ENCODE measurements at regions of chr14 and their contacts with region 1.

Region 1: GRCh38 chr14:104708606-104709268 is 15.3 kb upstream of the ADSS1 start:
- DNase-seq: peak in 9 of 10 donors; percentile 56 to 96 (median 78)

Region 2: DNA sequence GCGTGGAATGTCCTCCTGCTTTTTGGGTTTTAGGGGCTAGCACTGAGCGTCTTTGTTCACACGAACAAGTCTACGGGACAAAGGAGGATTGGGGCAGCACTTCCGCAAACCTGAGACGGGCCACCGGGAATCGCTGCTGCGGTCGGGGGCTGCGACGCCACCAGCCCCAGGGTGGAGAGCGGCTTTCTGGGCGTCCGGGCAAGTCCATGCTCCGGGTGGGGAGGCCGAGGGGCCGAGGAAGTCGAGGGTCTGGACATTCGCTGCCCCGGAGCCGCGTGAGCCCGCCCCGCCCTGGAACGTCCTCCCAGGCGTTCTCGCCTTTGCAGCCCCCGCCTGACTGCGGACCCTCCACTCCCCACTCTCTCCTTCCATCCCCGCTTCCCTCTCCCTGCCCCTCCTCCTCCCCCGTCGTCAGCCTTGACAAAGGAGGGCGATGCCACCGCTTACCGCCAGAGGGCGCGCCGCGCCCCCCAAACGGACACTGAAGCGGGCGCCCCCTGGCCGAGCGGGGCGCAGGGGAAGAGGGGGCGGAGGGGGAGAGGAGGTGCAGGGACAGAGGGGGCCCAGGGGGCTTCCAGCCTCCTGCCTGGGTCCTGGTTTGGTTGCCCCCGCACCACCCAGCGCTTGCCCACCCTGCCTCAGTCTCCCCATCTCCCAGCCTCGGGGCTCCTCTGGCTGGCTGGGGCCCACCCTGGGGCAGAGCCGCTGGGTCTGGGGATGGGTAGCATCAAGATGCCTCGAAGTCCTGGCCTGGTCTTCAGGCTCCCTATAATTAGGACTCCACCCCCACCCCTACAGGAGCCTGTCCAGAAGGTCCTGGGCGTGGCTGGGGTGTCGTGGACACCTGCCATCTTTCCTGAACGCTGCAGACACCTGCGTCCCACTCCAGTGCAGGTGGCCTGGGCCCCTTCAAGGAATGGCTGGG is 58.4 kb before region 1 on chr14:
- intact Hi-C with region 1: loop called (anchors 1 kb)
- DNase-seq: peak; percentile 47 to 96 (median 76)